ENCODE measurements at regions of chr2 and their contacts with region 1.

Region 1: GRCh38 chr2:239991689-239992314 is 33.3 kb downstream of the NDUFA10 start:
- DNase-seq: no peak
- ATAC-seq: peak; percentile 75
- H3K4me3 ChIP-seq: no peak overlapping the region
- H3K27ac ChIP-seq: no peak overlapping the region
- H3K4me1 ChIP-seq: no peaks in the 10 kb centered on the region
- H3K27me3 ChIP-seq: no peaks in the 10 kb centered on the region
- CTCF ChIP-seq: peak; percentile 66 to 81 (median 68); a peak in 5 of 6 replicates
- EP300 ChIP-seq: no peak
- POLR2A ChIP-seq: no peak
- RAD21 ChIP-seq: peak; percentile 73

Region 2: DNA sequence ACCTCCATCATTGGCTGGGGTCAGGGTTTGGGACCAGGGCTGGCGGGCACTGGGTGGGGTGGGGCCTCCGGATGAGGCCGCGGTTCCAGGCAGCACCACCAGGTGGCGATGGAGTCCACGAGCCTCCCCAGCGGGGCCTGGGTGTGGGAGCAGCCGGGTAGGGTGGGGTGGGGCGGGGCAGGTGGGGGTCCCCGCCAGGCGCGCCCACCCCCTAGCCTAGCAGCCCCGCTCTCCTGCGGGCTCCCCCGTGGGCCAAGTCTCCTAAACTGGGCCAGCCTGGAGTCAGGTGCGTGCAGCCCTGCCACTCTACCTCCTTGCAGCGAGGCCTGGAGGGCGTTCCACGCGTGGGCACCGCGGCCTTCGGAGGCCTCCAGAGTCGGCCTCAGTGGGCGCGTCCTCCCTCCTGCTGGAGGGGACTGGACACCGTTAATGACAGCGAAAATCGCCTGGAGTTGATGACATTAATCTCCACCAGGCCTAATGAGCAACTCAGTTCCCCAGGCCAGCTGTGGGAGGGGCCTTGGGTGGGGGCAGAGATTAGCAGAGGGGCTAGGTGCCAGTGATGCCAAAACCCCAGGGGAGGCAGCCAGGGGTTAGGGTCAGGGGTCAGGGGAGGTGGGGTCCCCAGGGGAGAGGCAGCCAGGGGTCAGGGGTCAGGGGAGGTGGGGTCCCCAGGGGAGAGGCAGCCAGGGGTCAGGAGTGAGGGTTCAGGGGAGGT is 956.3 kb before region 1 on chr2:
- CTCF ChIA-PET with region 1: no interaction called
- POLR2A ChIA-PET with region 1: no interaction called
- RAD21 ChIA-PET with region 1: no interaction called
- SMC1A ChIA-PET with region 1: interaction called, 3 read pairs
- in situ Hi-C with region 1: loop called (anchors 5 kb)
- intact Hi-C with region 1: loop called (anchors 10 kb)
- DNase-seq: no peak
- ATAC-seq: peak; percentile 98
- H3K4me3 ChIP-seq: no peak overlapping the region
- H3K27ac ChIP-seq: no peak overlapping the region
- H3K4me1 ChIP-seq: no peaks in the 10 kb centered on the region
- H3K27me3 ChIP-seq: no peaks in the 10 kb centered on the region; a peak in 1 of 4 replicates
- CTCF ChIP-seq: peak; percentile 58 to 91 (median 76)
- EP300 ChIP-seq: no peak
- POLR2A ChIP-seq: no peak
- RAD21 ChIP-seq: peak; percentile 77

Region 3: GRCh38 chr2:239716536-239717318 is 275.1 kb before region 1 on chr2:
- CTCF ChIA-PET with region 1: no interaction called
- POLR2A ChIA-PET with region 1: no interaction called
- RAD21 ChIA-PET with region 1: no interaction called
- SMC1A ChIA-PET with region 1: no interaction called
- in situ Hi-C with region 1: no loop called
- intact Hi-C with region 1: no loop called
- DNase-seq: no peak
- ATAC-seq: no peak
- H3K4me3 ChIP-seq: no peak overlapping the region
- H3K27ac ChIP-seq: no peak overlapping the region
- H3K4me1 ChIP-seq: no peaks in the 10 kb centered on the region
- H3K27me3 ChIP-seq: no peaks in the 10 kb centered on the region
- CTCF ChIP-seq: no peak
- EP300 ChIP-seq: no peak
- POLR2A ChIP-seq: no peak
- RAD21 ChIP-seq: no peak

Region 4: DNA sequence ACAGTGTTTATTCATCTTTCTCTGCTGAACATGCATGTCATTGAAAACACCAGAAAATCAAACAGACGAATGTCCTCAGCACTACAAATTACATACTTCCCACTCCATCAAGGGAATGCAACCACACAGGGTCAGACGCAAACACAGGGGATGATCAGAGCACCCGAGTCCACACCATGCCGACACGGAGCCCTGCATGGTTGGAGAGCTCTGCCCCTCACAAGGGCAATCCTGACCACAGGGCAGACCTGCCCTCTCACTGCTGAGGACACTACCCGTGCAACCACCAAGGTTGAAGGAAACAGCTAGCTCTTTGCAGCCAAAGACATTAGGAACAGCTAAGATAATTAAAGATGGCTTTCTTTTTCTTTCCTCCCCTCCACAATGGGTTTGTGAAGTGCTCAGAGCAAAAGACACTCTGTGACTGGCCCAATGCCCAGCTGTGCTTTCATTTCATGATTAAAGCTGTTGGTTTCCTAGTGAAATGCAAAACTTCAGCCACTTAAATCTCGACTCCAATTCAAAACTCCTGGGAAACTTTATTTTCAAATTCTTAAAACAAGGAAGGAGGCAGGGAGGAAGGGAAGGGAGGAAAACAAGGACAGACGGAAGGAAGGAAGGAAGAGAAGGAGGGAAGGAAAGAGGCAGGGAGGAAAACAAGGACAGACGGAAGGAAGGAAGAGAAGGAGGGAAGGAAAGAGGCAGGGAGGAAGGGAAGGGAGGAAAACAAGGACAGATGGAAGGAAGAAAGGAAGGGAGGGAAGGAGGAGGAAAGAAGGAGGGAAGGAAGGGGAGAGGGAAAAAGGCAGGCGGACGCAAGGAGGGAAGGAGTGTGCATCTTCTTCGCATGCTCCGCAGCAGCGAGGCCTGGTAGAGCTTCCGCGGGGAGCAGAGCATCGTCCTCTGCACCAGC is 32.5 kb before region 1 on chr2:
- CTCF ChIA-PET with region 1: interaction called, 24 read pairs
- POLR2A ChIA-PET with region 1: no interaction called
- RAD21 ChIA-PET with region 1: interaction called, 3 read pairs
- SMC1A ChIA-PET with region 1: interaction called, 15 read pairs
- in situ Hi-C with region 1: no loop called
- intact Hi-C with region 1: no loop called
- DNase-seq: no peak
- ATAC-seq: no peak
- H3K4me3 ChIP-seq: no peak overlapping the region
- H3K27ac ChIP-seq: no peak overlapping the region
- H3K4me1 ChIP-seq: peaks cover 3% of the 10 kb centered on the region
- H3K27me3 ChIP-seq: no peaks in the 10 kb centered on the region
- CTCF ChIP-seq: no peak
- EP300 ChIP-seq: no peak
- POLR2A ChIP-seq: no peak
- RAD21 ChIP-seq: no peak

Region 5: DNA sequence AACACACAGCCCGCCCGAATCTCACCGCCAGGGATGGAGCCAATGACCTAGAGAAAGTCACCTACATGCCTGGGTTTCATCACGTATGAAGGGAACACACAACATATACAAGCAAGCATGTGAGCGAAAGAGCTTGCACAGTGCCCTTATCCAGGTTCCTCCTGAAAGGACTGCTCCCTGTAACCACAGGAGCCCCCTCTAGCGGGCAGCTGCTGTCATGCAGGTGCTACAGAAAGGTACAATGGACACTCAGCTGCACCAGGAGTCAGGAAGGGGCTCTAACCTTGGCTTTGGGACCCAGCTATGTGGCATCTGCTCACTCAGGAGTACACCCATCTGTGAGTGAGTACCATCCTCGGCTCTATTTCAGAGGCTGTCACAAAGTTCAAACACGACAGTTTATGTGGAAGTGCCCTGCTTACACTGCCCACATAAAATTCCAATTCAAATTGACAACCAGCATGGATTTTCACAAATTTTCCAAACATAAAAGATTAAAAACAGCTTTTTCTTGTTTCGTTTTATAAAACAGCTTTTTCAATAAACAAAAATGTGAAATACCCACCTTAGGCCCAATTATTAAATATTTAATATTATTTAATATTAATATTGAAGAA is 29.8 kb after region 1 on chr2:
- CTCF ChIA-PET with region 1: interaction called, 19 read pairs
- POLR2A ChIA-PET with region 1: no interaction called
- RAD21 ChIA-PET with region 1: no interaction called
- SMC1A ChIA-PET with region 1: interaction called, 4 read pairs
- in situ Hi-C with region 1: no loop called
- intact Hi-C with region 1: no loop called
- DNase-seq: no peak
- ATAC-seq: peak; percentile 33
- H3K4me3 ChIP-seq: no peak overlapping the region
- H3K27ac ChIP-seq: no peak overlapping the region
- H3K4me1 ChIP-seq: no peaks in the 10 kb centered on the region; the same call in none of the 2 replicates
- H3K27me3 ChIP-seq: no peaks in the 10 kb centered on the region
- CTCF ChIP-seq: peak; percentile 69 to 92 (median 88)
- EP300 ChIP-seq: no peak
- POLR2A ChIP-seq: no peak
- RAD21 ChIP-seq: peak; percentile 27; the same call in 1 of the 2 replicates

Region 6: GRCh38 chr2:240232961-240233893 is 241.4 kb after region 1 on chr2:
- CTCF ChIA-PET with region 1: no interaction called
- POLR2A ChIA-PET with region 1: no interaction called
- RAD21 ChIA-PET with region 1: no interaction called
- SMC1A ChIA-PET with region 1: no interaction called
- in situ Hi-C with region 1: no loop called
- intact Hi-C with region 1: no loop called
- DNase-seq: no peak
- ATAC-seq: peak; percentile 69
- H3K4me3 ChIP-seq: no peak overlapping the region
- H3K27ac ChIP-seq: no peak overlapping the region
- H3K4me1 ChIP-seq: no peaks in the 10 kb centered on the region
- H3K27me3 ChIP-seq: no peaks in the 10 kb centered on the region
- CTCF ChIP-seq: peak; percentile 35 to 46 (median 36); a peak in 5 of 6 replicates
- EP300 ChIP-seq: no peak
- POLR2A ChIP-seq: no peak
- RAD21 ChIP-seq: peak; percentile 50

Measured in GM12878 (cell line).